Breast epithelium (tissue), 4 donors: ENCODE measurements at regions of chr2 and their contacts with region 1.

Region 1: DNA sequence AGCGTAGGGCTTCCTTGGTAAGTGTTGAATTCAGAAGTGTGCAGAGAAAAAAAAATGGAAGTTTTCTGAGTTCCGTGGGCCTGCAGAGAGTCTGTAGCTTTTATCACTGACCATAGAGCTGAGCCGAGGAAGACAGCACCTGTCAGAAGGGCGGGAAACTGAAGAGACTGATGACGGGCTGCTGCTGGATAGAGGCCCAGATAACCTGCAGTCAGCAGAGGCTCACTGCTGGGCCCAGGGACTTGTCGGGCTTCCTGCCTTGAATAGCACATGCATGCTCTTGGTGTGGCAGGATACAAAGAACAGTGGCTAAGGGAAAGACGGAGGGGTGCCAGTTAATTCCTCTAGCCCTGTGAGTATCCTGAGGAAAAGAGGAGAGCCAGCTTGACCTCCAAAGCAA is 166.4 kb downstream of the MGAT5 start:
- DNase-seq: no peak
- H3K4me3 ChIP-seq: no peak overlapping the region
- H3K27ac ChIP-seq: no peak overlapping the region
- H3K4me1 ChIP-seq: no peaks in the 10 kb centered on the region
- H3K27me3 ChIP-seq: no peaks in the 10 kb centered on the region
- CTCF ChIP-seq: no peak
- POLR2A ChIP-seq: no peak

Region 2: GRCh38 chr2:133886735-133887660 is 533.3 kb before region 1 on chr2:
- intact Hi-C with region 1: loop called (anchors 10 kb)
- DNase-seq: peak; percentile 75 to 81
- H3K4me3 ChIP-seq: peak overlapping the region in 1 of 3 donors; percentile 12
- H3K27ac ChIP-seq: peak overlapping the region in 1 of 2 donors; percentile 26
- H3K4me1 ChIP-seq: peaks cover 6 to 7% of the 10 kb centered on the region in 2 donors
- H3K27me3 ChIP-seq: no peaks in the 10 kb centered on the region
- CTCF ChIP-seq: peak; percentile 31 to 69 (median 68)
- POLR2A ChIP-seq: no peak

Region 3: GRCh38 chr2:134883552-134884293 is 463.5 kb after region 1 on chr2:
- intact Hi-C with region 1: no loop called
- DNase-seq: no peak
- H3K4me3 ChIP-seq: no peak overlapping the region
- H3K27ac ChIP-seq: no peak overlapping the region
- H3K4me1 ChIP-seq: no peaks in the 10 kb centered on the region
- H3K27me3 ChIP-seq: no peaks in the 10 kb centered on the region
- CTCF ChIP-seq: no peak
- POLR2A ChIP-seq: no peak

Region 4: GRCh38 chr2:135144344-135144743 is 724.1 kb after region 1 on chr2:
- intact Hi-C with region 1: loop called (anchors 5 kb)
- DNase-seq: no peak
- H3K4me3 ChIP-seq: no peak overlapping the region
- H3K27ac ChIP-seq: no peak overlapping the region
- H3K4me1 ChIP-seq: no peaks in the 10 kb centered on the region
- H3K27me3 ChIP-seq: no peaks in the 10 kb centered on the region
- CTCF ChIP-seq: no peak
- POLR2A ChIP-seq: no peak